ENCODE measurements at regions of chrX and their contacts with region 1.

Region 1: DNA sequence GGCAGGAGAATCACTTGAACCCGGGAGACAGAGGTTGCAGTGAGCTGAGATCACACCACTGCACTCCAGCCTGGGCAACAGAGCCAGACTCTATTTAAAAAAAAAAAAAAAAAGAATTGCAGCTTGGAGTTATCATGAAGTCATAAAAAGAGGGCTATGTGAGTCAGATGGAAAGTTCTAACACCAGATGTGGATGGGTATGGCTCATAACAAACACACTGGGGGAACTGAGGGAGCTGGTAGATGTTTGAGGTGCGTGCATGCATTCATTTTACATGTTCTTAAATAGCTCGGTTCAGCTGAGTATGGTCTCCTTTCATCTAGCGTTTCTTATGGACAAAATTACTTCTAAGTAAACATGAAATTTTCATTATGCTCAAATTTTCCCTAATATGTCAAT is 11.7 kb downstream of the TRMT2B start:
- DNase-seq: no peak
- ATAC-seq: no peak
- H3K4me3 ChIP-seq: no peak overlapping the region
- H3K27ac ChIP-seq: no peak overlapping the region
- H3K4me1 ChIP-seq: no peaks in the 10 kb centered on the region
- H3K27me3 ChIP-seq: no peaks in the 10 kb centered on the region
- CTCF ChIP-seq: no peak

Region 2: DNA sequence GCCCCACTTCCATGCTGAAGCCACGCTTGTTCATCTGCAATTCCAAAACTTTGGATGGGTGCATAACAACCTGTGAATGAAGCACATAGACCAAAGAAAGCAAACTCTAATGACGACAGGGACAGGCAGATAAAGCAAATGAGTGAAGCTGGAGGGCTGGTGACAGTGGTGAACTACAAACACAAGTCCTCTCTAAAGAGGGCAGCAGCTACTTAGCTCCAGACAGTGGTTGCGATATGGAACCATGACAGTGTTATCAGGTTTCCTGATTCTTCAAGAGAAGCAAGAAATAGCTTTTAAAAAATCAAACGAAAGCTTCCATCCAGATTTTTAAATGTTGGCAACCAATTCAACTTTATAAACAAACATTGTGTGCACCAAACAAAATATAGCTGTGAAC is 189.9 kb before region 1 on chrX:
- CTCF ChIA-PET with region 1: no interaction called
- POLR2A ChIA-PET with region 1: interaction called, 13 read pairs
- in situ Hi-C with region 1: no loop called
- intact Hi-C with region 1: no loop called
- DNase-seq: no peak
- ATAC-seq: peak; percentile 51; the same call in 1 of the 2 replicates
- H3K4me3 ChIP-seq: no peak overlapping the region
- H3K27ac ChIP-seq: no peak overlapping the region
- H3K4me1 ChIP-seq: no peaks in the 10 kb centered on the region
- H3K27me3 ChIP-seq: no peaks in the 10 kb centered on the region
- CTCF ChIP-seq: no peak

Region 3: DNA sequence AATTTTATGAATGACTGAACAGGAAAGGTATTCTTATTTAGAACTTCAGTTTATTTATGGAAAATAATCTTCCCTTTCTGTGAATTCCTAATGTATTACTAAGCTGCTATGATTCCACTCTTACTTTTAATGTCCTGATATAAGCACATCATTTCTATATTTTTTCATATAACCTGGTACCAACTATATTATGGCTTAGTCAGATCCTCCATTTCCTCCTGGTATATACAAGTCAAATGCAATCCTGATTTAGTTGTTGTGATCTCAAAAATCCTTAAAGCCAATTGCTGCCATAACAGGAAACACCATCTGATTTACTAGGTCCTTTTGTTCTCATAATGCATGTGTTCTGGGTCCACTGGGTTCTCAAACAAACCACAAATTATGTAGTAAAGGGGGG is 15.1 kb before region 1 on chrX:
- CTCF ChIA-PET with region 1: interaction called, 10 read pairs
- POLR2A ChIA-PET with region 1: no interaction called
- in situ Hi-C with region 1: no loop called
- intact Hi-C with region 1: no loop called
- DNase-seq: no peak
- ATAC-seq: no peak
- H3K4me3 ChIP-seq: no peak overlapping the region
- H3K27ac ChIP-seq: no peak overlapping the region
- H3K4me1 ChIP-seq: no peaks in the 10 kb centered on the region
- H3K27me3 ChIP-seq: no peaks in the 10 kb centered on the region
- CTCF ChIP-seq: no peak

Region 4: GRCh38 chrX:101051549-101052302 is 11.5 kb after region 1 on chrX and contains the start of gene TRMT2B:
- CTCF ChIA-PET with region 1: no interaction called
- POLR2A ChIA-PET with region 1: interaction called, 15 read pairs
- in situ Hi-C with region 1: no loop called
- intact Hi-C with region 1: no loop called
- DNase-seq: peak; percentile 67
- ATAC-seq: peak; percentile 99
- H3K4me3 ChIP-seq: peak within 1 kb of the TSS; percentile 82 to 94
- H3K27ac ChIP-seq: peak within 1 kb of the TSS; percentile 97
- H3K4me1 ChIP-seq: peaks cover 9% of the 10 kb centered on the region; the same call in 1 of the 2 replicates
- H3K27me3 ChIP-seq: no peaks in the 10 kb centered on the region
- CTCF ChIP-seq: no peak
- total RNA-seq, gene TRMT2B: 39.7 TPM

Region 5: GRCh38 chrX:101057093-101057714 is 17.0 kb after region 1 on chrX:
- CTCF ChIA-PET with region 1: no interaction called
- POLR2A ChIA-PET with region 1: interaction called, 15 read pairs
- in situ Hi-C with region 1: no loop called
- intact Hi-C with region 1: no loop called
- DNase-seq: peak; percentile 27
- ATAC-seq: peak; percentile 71
- H3K4me3 ChIP-seq: no peak overlapping the region
- H3K27ac ChIP-seq: no peak overlapping the region
- H3K4me1 ChIP-seq: 0 out of 2 replicates have a peak, but pooled peaks cover 5% of the 10 kb centered on the region
- H3K27me3 ChIP-seq: no peaks in the 10 kb centered on the region
- CTCF ChIP-seq: no peak

Measured in Panc1 (cell line).